IMR-90 (cell line): ENCODE measurements at regions of chr7 and their contacts with region 1.

Region 1: DNA sequence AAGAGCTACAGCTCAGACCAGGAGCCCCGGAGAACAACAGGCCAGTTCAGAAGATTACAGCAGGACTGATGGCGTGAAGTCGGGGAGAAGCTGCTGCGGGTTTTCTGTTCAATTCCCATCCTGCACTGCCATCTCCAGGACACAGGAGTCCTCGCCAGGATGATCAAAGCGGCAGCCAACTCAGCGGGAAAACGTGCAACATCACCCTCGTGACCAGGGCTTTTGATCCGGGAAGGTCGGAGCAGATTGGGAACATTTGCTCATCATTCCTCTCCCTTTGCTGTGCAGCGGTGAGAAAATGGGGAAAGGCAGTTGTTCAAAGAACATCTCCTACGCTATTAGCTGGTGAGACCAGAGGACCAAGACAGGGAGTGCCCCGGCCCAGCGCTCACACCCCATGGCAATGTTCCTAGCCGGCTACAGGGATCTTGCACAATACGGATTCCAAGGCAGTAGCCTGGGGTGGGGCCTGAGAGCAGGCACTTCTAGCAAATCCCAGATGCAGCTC is 50.4 kb upstream of the FOXK1 start:
- DNase-seq: peak; percentile 91
- ATAC-seq: peak; percentile 95
- H3K4me3 ChIP-seq: peak overlapping the region; percentile 42
- H3K27ac ChIP-seq: peak overlapping the region; percentile 85
- H3K4me1 ChIP-seq: peaks cover 4% of the 10 kb centered on the region; the same call in 1 of the 2 replicates
- H3K27me3 ChIP-seq: peaks cover 5% of the 10 kb centered on the region; the same call in 1 of the 2 replicates
- CTCF ChIP-seq: peak; percentile 81
- POLR2A ChIP-seq: no peak
- RAD21 ChIP-seq: peak; percentile 86

Region 2: GRCh38 chr7:2886900-2887299 is 1744.8 kb before region 1 on chr7:
- CTCF ChIA-PET with region 1: no interaction called
- POLR2A ChIA-PET with region 1: no interaction called
- dilution Hi-C with region 1: no loop called
- in situ Hi-C with region 1: no loop called
- intact Hi-C with region 1: loop called (anchors 5 kb)
- DNase-seq: peak; percentile 82
- ATAC-seq: peak; percentile 98
- H3K4me3 ChIP-seq: no peak overlapping the region
- H3K27ac ChIP-seq: no peak overlapping the region
- H3K4me1 ChIP-seq: no peaks in the 10 kb centered on the region
- H3K27me3 ChIP-seq: peaks cover 2% of the 10 kb centered on the region; the same call in 1 of the 2 replicates
- CTCF ChIP-seq: peak; percentile 76
- POLR2A ChIP-seq: no peak
- RAD21 ChIP-seq: peak; percentile 81

Region 3: DNA sequence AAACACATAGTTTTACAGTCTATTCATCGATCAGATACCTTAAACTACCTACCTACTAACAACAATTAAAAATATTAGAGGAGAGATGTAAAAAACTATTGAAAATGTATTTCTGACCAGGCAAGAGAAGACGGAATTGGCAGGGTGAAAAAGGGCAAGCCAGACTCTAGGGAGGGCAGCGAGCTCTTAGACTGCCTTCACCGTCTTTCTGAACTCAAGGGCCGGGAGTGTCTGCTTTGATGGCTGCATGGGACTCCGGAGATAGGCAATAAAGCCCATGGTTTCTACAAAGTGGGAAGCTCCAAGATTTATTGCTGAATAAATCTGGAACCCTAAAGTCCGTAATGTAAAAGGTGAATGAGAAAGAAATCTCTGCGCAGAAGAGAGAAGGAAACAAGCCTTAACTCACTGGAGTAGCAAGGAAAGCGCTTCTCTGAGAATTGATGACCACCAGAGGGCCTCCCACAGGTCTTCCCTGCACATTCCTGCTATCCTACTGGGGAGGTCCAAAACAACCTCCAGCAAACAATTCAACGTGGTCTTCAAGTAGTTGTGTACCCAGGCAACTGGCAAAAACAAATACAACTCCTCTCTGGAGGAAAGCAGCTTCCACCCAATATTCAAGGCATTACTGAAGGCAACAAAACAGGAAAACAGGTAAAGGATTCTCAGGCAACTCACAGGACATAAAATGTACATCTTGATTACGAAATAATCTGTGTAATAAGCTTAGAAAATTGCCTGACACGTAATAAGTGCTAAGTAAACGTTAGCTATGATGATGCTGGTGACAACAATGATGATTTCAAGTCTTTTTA is 1149.4 kb before region 1 on chr7:
- CTCF ChIA-PET with region 1: no interaction called
- POLR2A ChIA-PET with region 1: no interaction called
- dilution Hi-C with region 1: no loop called
- in situ Hi-C with region 1: no loop called
- intact Hi-C with region 1: loop called (anchors 10 kb)
- DNase-seq: peak; percentile 35
- ATAC-seq: peak; percentile 81
- H3K4me3 ChIP-seq: no peak overlapping the region
- H3K27ac ChIP-seq: no peak overlapping the region
- H3K4me1 ChIP-seq: 0 out of 2 replicates have a peak, but pooled peaks cover 2% of the 10 kb centered on the region
- H3K27me3 ChIP-seq: no peaks in the 10 kb centered on the region
- CTCF ChIP-seq: peak; percentile 37
- POLR2A ChIP-seq: no peak
- RAD21 ChIP-seq: peak; percentile 39

Region 4: DNA sequence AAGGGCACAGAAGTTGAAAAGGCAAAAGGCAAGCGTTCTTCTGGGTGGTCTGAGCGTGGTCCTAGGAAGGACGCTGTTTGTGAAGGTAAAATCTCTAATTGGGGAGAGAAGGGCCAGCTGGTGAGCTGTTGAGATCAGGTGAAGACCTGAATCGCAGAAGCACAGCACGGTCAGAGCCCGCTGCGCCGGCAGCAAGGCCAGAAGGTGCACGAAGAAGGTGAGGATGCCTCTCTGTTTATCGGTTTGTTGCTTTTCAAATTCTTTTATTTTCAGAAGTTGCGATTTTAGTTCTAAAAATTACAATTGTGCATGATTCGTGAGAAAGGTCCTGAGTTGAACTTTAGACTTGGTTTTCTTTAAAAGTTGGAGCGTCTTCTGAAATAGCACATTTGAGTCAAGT is 197.4 kb before region 1 on chr7:
- CTCF ChIA-PET with region 1: no interaction called
- POLR2A ChIA-PET with region 1: no interaction called
- dilution Hi-C with region 1: no loop called
- in situ Hi-C with region 1: no loop called
- intact Hi-C with region 1: no loop called
- DNase-seq: no peak
- ATAC-seq: no peak
- H3K4me3 ChIP-seq: no peak overlapping the region
- H3K27ac ChIP-seq: no peak overlapping the region
- H3K4me1 ChIP-seq: no peaks in the 10 kb centered on the region
- H3K27me3 ChIP-seq: no peaks in the 10 kb centered on the region
- CTCF ChIP-seq: no peak
- POLR2A ChIP-seq: no peak
- RAD21 ChIP-seq: no peak

Region 5: GRCh38 chr7:4449263-4449662 is 182.5 kb before region 1 on chr7:
- CTCF ChIA-PET with region 1: no interaction called
- POLR2A ChIA-PET with region 1: no interaction called
- dilution Hi-C with region 1: no loop called
- in situ Hi-C with region 1: no loop called
- intact Hi-C with region 1: no loop called
- DNase-seq: no peak
- ATAC-seq: no peak
- H3K4me3 ChIP-seq: no peak overlapping the region
- H3K27ac ChIP-seq: no peak overlapping the region
- H3K4me1 ChIP-seq: no peaks in the 10 kb centered on the region
- H3K27me3 ChIP-seq: no peaks in the 10 kb centered on the region
- CTCF ChIP-seq: no peak
- POLR2A ChIP-seq: no peak
- RAD21 ChIP-seq: no peak

Region 6: GRCh38 chr7:4470246-4470645 is 161.5 kb before region 1 on chr7:
- CTCF ChIA-PET with region 1: no interaction called
- POLR2A ChIA-PET with region 1: no interaction called
- dilution Hi-C with region 1: no loop called
- in situ Hi-C with region 1: no loop called
- intact Hi-C with region 1: no loop called
- DNase-seq: no peak
- ATAC-seq: no peak
- H3K4me3 ChIP-seq: no peak overlapping the region
- H3K27ac ChIP-seq: no peak overlapping the region
- H3K4me1 ChIP-seq: no peaks in the 10 kb centered on the region
- H3K27me3 ChIP-seq: no peaks in the 10 kb centered on the region
- CTCF ChIP-seq: no peak
- POLR2A ChIP-seq: no peak
- RAD21 ChIP-seq: no peak

Region 7: DNA sequence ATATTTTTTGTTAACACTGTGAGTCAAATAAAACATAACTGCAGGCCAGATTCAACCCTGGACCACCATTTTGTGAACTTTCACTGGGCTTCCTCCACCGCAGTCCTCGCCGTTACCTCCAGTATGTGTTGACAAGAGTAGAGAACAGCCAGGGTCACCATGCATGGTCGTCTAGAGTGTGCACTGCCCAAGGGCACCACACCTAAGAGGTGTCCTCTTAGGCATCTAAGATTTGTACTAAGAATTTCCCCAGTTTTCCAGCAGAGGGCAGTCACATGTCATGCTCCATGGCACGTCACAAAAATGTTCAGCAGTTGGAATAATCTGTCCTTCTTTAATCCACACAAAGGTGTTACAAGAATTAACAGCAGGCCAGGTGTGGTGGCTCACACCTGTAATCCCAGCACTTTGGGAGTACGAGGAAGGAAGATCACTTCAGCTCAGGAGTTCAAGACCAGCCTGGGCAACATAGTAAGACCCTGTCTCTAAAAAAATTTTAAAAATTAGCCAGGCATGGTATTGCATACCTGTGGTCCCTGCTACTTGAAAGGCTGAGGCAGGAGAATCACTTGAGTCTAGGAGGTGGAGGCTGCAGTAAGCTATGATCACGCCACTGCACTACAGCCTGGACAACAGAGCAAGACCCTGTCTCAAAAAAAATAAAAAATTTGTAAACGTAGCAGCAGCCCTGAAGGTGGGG is 20.8 kb before region 1 on chr7:
- CTCF ChIA-PET with region 1: interaction called, 8 read pairs
- POLR2A ChIA-PET with region 1: no interaction called
- dilution Hi-C with region 1: no loop called
- in situ Hi-C with region 1: no loop called
- intact Hi-C with region 1: loop called (anchors 1 kb)
- DNase-seq: peak; percentile 69
- ATAC-seq: peak; percentile 60
- H3K4me3 ChIP-seq: no peak overlapping the region
- H3K27ac ChIP-seq: no peak overlapping the region
- H3K4me1 ChIP-seq: peaks cover 10% of the 10 kb centered on the region
- H3K27me3 ChIP-seq: peaks cover 3% of the 10 kb centered on the region
- CTCF ChIP-seq: peak; percentile 86
- POLR2A ChIP-seq: peak; percentile 44; the same call in 1 of the 2 replicates
- RAD21 ChIP-seq: peak; percentile 93

Region 8: GRCh38 chr7:4641667-4642467 is 10.1 kb after region 1 on chr7:
- CTCF ChIA-PET with region 1: interaction called, 12 read pairs
- POLR2A ChIA-PET with region 1: no interaction called
- dilution Hi-C with region 1: no loop called
- in situ Hi-C with region 1: no loop called
- intact Hi-C with region 1: no loop called
- DNase-seq: peak; percentile 89
- ATAC-seq: peak; percentile 95
- H3K4me3 ChIP-seq: peak overlapping the region; percentile 74
- H3K27ac ChIP-seq: peak overlapping the region; percentile 97
- H3K4me1 ChIP-seq: 0 out of 2 replicates have a peak, but pooled peaks cover 2% of the 10 kb centered on the region
- H3K27me3 ChIP-seq: no peaks in the 10 kb centered on the region
- CTCF ChIP-seq: peak; percentile 72
- POLR2A ChIP-seq: peak; percentile 72; the same call in 1 of the 2 replicates
- RAD21 ChIP-seq: peak; percentile 44

Region 9: GRCh38 chr7:5477723-5478531 is 846.2 kb after region 1 on chr7:
- CTCF ChIA-PET with region 1: no interaction called
- POLR2A ChIA-PET with region 1: no interaction called
- dilution Hi-C with region 1: no loop called
- in situ Hi-C with region 1: no loop called
- intact Hi-C with region 1: no loop called
- DNase-seq: no peak
- ATAC-seq: peak; percentile 43
- H3K4me3 ChIP-seq: no peak overlapping the region
- H3K27ac ChIP-seq: no peak overlapping the region
- H3K4me1 ChIP-seq: no peaks in the 10 kb centered on the region; the same call in 1 of the 2 replicates
- H3K27me3 ChIP-seq: no peaks in the 10 kb centered on the region
- CTCF ChIP-seq: peak; percentile 20; the same call in 1 of the 2 replicates
- POLR2A ChIP-seq: no peak
- RAD21 ChIP-seq: no peak